ENCODE measurements at regions of chr1 and their contacts with region 1.

Region 1: GRCh38 chr1:42777852-42778251 is 6.9 kb upstream of the TMEM269 start:
- DNase-seq: no peak
- ATAC-seq: peak; percentile 77
- H3K4me3 ChIP-seq: no peak overlapping the region
- H3K27ac ChIP-seq: no peak overlapping the region
- H3K4me1 ChIP-seq: peaks cover 5% of the 10 kb centered on the region; the same call in 1 of the 2 replicates
- H3K27me3 ChIP-seq: no peaks in the 10 kb centered on the region
- CTCF ChIP-seq: peak; percentile 69 to 76 (median 71)
- EP300 ChIP-seq: no peak
- POLR2A ChIP-seq: no peak
- RAD21 ChIP-seq: peak; percentile 85

Region 2: DNA sequence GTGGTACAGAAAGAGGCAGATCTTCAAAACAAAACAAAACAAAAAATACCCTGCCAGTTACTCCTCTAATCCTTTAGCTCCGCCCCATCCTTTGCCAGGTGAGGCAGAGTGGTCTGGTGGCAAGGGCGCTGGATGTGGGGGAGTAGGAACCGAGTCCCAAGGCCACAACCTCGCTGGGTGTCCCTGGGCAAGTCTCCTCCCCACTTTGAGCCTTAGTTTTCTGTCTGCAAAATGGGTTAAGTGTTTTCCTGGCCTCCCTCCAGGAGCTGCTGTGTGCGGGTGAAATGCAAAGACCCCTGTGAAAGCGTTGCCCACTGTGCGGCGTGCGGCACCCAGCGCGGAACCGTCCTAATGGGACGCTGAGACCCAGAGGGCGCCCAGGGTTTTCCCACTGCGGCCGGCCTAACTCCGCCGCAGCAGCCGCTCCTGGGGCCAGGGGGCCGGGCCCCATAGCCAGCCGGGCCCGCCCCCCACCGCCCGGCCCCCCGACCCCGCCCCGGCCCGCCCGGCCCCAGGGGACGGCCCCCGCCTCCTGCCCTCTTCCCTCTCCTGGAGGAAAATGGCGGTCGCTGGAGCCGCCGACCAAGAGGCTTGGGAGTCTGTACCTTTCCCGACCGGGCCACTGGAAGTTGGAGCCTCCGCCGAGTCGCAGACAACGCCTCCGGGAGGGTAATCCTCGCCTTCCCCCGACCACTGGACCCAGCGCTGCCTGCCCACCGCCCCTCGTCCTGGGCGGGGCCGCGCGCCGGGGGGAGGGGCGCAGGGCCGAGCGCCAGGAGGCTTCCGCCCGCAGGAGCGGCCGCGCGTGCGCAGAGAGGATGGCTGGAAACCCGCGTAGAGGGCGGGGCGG is 39.0 kb after region 1 on chr1 and contains the starts of genes ERMAP and SVBP:
- CTCF ChIA-PET with region 1: interaction called, 16 read pairs
- POLR2A ChIA-PET with region 1: interaction called, 3 read pairs
- RAD21 ChIA-PET with region 1: interaction called, 4 read pairs
- SMC1A ChIA-PET with region 1: interaction called, 4 read pairs
- in situ Hi-C with region 1: no loop called
- intact Hi-C with region 1: no loop called
- DNase-seq: peak; percentile 43
- ATAC-seq: peak; percentile 95
- H3K4me3 ChIP-seq: peak within 1 kb of the TSS; percentile 84
- H3K27ac ChIP-seq: peak within 1 kb of the TSS; percentile 87
- H3K4me1 ChIP-seq: peaks cover 4% of the 10 kb centered on the region; the same call in 1 of the 2 replicates
- H3K27me3 ChIP-seq: no peaks in the 10 kb centered on the region
- CTCF ChIP-seq: peak in 1 of 3 experiments; percentile 24; a peak in 2 of 6 replicates
- EP300 ChIP-seq: no peak
- POLR2A ChIP-seq: peak; percentile 90
- RAD21 ChIP-seq: no peak
- polyA plus RNA-seq, gene ERMAP: 1.4 to 2.2 TPM
- polyA plus RNA-seq, gene SVBP: 19.8 to 29.5 TPM

Region 3: GRCh38 chr1:42913426-42914091 is 135.7 kb after region 1 on chr1:
- CTCF ChIA-PET with region 1: interaction called, 21 read pairs
- POLR2A ChIA-PET with region 1: no interaction called
- RAD21 ChIA-PET with region 1: interaction called, 4 read pairs
- SMC1A ChIA-PET with region 1: interaction called, 35 read pairs
- in situ Hi-C with region 1: no loop called
- intact Hi-C with region 1: loop called (anchors 2 kb)
- DNase-seq: peak; percentile 64
- ATAC-seq: peak; percentile 88
- H3K4me3 ChIP-seq: no peak overlapping the region
- H3K27ac ChIP-seq: no peak overlapping the region
- H3K4me1 ChIP-seq: no peaks in the 10 kb centered on the region
- H3K27me3 ChIP-seq: no peaks in the 10 kb centered on the region
- CTCF ChIP-seq: peak; percentile 72 to 76 (median 74)
- EP300 ChIP-seq: no peak
- POLR2A ChIP-seq: no peak
- RAD21 ChIP-seq: peak; percentile 91

Measured in GM12878 (cell line).